ENCODE measurements at regions of chr17 and their contacts with region 1.

Region 1: DNA sequence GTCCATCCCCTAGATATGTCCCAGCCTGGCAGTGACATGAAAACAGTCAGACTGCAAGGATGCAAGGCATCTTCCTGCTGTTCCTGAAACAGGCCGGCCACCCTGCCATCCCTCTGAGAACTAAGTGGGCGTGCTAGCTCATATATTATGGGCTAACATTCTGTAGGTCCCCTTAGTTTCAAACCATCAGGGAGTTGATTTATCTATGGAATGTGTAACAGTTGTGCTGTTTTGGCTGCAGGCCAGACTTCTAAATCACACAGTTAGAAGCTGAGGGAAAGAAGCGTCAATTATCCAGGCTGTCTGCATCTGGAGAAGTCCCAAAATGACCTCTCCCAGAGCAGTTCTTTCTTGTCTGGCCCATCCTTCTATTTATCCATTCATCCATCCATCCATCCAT is 102.7 kb upstream of the DNAH9 start:
- DNase-seq: peak; percentile 95
- H3K4me3 ChIP-seq: no peak overlapping the region
- H3K27ac ChIP-seq: peak overlapping the region; percentile 65
- H3K4me1 ChIP-seq: peaks cover 48% of the 10 kb centered on the region
- H3K27me3 ChIP-seq: no peaks in the 10 kb centered on the region
- CTCF ChIP-seq: no peak

Region 2: GRCh38 chr17:11330826-11331225 is 164.8 kb before region 1 on chr17:
- CTCF ChIA-PET with region 1: no interaction called
- POLR2A ChIA-PET with region 1: no interaction called
- intact Hi-C with region 1: loop called (anchors 5 kb)
- DNase-seq: peak; percentile 95
- H3K4me3 ChIP-seq: peak overlapping the region; percentile 14
- H3K27ac ChIP-seq: peak overlapping the region; percentile 66
- H3K4me1 ChIP-seq: peaks cover 48% of the 10 kb centered on the region
- H3K27me3 ChIP-seq: no peaks in the 10 kb centered on the region
- CTCF ChIP-seq: no peak

Region 3: GRCh38 chr17:11349106-11349505 is 146.5 kb before region 1 on chr17:
- CTCF ChIA-PET with region 1: no interaction called
- POLR2A ChIA-PET with region 1: interaction called, 14 read pairs
- intact Hi-C with region 1: no loop called
- DNase-seq: no peak
- H3K4me3 ChIP-seq: no peak overlapping the region
- H3K27ac ChIP-seq: no peak overlapping the region
- H3K4me1 ChIP-seq: no peaks in the 10 kb centered on the region
- H3K27me3 ChIP-seq: no peaks in the 10 kb centered on the region
- CTCF ChIP-seq: no peak

Region 4: GRCh38 chr17:11446316-11446715 is 49.3 kb before region 1 on chr17:
- CTCF ChIA-PET with region 1: no interaction called
- POLR2A ChIA-PET with region 1: no interaction called
- intact Hi-C with region 1: no loop called
- DNase-seq: no peak
- H3K4me3 ChIP-seq: no peak overlapping the region
- H3K27ac ChIP-seq: no peak overlapping the region
- H3K4me1 ChIP-seq: peaks cover 6% of the 10 kb centered on the region
- H3K27me3 ChIP-seq: no peaks in the 10 kb centered on the region
- CTCF ChIP-seq: no peak